Prostate gland (tissue), 2 donors: ENCODE measurements at regions of chr2 and their contacts with region 1.

Region 1: DNA sequence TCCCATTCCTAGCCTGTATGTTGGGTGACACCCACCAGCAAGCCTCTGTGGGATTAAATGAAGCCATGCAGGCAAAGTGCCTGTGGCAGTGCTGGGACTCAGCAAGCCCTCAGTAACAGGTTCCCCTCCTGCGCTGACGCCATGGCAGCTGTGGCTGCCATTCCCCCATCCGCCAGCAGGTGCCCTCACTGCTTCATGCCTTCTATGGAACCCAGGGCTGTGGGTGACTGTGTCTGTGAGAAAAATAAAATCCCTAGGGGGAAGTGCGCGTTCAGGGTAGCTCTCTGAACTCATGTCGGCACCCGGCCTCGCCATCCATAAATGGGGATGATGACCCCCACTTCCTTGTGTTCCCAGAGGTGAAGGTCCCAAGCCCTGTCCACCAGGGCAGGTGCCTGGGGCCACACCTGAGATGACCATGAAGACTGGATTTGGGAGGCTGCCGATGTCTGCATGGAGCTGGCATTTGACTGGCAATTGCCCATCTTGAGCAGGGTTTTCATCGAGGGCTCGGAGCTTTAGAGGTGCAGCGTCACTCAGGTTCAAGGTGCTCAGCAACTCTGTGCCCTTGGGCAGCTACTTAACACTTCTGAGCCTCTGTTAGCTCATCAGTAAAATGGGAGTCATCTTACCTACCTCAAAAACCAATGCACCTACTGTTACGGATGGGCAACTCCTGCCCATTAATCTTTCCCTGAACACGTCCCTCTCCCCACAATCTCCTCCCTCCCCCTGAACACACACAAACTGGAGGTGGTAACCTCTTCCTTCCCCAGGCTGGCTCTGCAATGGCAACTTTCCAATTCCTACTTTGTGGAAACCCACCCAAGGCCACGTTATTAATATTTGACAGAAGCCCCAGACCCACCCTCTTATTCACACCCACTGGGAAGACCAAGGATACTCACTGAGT is 2.9 kb upstream of the MAL start:
- DNase-seq: peak; percentile 24
- H3K4me3 ChIP-seq: no peak overlapping the region
- H3K27ac ChIP-seq: no peak overlapping the region
- H3K4me1 ChIP-seq: peaks cover 6% of the 10 kb centered on the region
- H3K27me3 ChIP-seq: peaks cover 20% of the 10 kb centered on the region
- CTCF ChIP-seq: peak; percentile 72 to 82 (median 80)
- POLR2A ChIP-seq: no peak

Region 2: GRCh38 chr2:94880507-94880906 is 142.1 kb before region 1 on chr2:
- intact Hi-C with region 1: no loop called
- DNase-seq: no peak
- H3K4me3 ChIP-seq: no peak overlapping the region
- H3K27ac ChIP-seq: no peak overlapping the region
- H3K4me1 ChIP-seq: no peaks in the 10 kb centered on the region
- H3K27me3 ChIP-seq: no peaks in the 10 kb centered on the region
- CTCF ChIP-seq: no peak
- POLR2A ChIP-seq: no peak

Region 3: DNA sequence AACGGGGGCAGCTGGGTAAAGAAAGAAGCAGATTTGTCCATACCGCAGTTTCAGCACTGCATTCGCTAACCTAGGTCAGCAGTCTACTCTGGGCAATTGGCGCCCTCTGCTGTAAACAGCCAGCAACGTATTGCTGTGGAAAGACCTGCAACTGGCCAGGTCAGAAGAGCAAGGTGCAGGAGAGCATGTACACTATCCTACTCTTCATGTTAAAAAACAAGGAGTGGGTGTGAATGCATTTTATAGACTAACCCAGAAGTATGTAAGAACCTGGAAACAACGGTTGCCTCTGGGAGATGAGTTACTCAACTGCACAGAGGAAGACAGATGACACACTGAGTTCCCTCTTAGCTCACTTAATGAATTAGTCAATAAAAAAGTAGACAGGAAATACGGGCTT is 92.9 kb after region 1 on chr2:
- intact Hi-C with region 1: loop called (anchors 1 kb)
- DNase-seq: peak; percentile 67
- H3K4me3 ChIP-seq: no peak overlapping the region
- H3K27ac ChIP-seq: no peak overlapping the region
- H3K4me1 ChIP-seq: no peaks in the 10 kb centered on the region
- H3K27me3 ChIP-seq: no peaks in the 10 kb centered on the region
- CTCF ChIP-seq: peak in 3 of 4 experiments; percentile 47 to 72 (median 64)
- POLR2A ChIP-seq: no peak

Region 4: GRCh38 chr2:96888072-96889011 is 1865.8 kb after region 1 on chr2:
- intact Hi-C with region 1: no loop called
- DNase-seq: peak; percentile 95
- H3K4me3 ChIP-seq: no peak overlapping the region
- H3K27ac ChIP-seq: peak overlapping the region; percentile 76 to 86
- H3K4me1 ChIP-seq: peaks cover 19% of the 10 kb centered on the region
- H3K27me3 ChIP-seq: no peaks in the 10 kb centered on the region
- CTCF ChIP-seq: no peak
- POLR2A ChIP-seq: no peak